ENCODE measurements at regions of chr6 and their contacts with region 1.

Region 1: GRCh38 chr6:154154359-154154967 is 115.4 kb downstream of the OPRM1 start:
- DNase-seq: no peak
- H3K4me3 ChIP-seq: no peak overlapping the region
- H3K27ac ChIP-seq: no peak overlapping the region
- H3K4me1 ChIP-seq: peaks cover 19% of the 10 kb centered on the region
- H3K27me3 ChIP-seq: no peaks in the 10 kb centered on the region
- CTCF ChIP-seq: peak; percentile 87

Region 2: DNA sequence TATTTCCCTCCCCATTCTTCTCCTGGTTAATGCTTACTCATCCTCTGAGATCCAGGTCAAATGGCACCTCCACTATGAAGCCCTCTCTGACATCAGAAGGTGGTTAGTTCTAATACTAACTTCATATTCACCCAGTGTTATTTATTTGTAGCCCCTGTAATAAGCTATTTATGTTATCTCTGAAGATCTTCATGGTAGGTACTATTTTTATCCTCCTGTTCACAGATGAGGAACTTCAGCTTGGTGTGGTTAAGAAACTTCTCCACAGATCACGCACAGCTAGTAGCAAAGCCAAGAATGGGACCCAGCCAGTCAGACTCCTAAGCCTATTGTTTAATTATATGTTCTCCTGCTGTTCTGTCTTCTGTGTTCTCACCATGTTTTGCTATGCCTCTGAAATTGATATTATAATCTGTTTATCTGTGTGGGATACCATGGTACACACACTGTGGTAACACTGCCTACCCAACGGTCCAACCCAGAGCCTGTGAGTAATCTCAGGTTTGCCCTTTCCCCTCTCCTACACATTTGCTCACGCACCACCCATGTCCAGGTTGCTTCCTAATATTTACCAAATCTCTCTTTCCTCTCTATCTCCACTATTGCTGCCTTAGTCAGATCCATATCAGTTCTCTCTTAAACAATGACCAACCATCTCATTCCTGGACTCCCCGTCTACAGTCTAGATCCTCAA is 103.7 kb after region 1 on chr6:
- intact Hi-C with region 1: no loop called
- DNase-seq: no peak
- H3K4me3 ChIP-seq: no peak overlapping the region
- H3K27ac ChIP-seq: no peak overlapping the region
- H3K4me1 ChIP-seq: peaks cover 6% of the 10 kb centered on the region
- H3K27me3 ChIP-seq: no peaks in the 10 kb centered on the region
- CTCF ChIP-seq: no peak

Region 3: DNA sequence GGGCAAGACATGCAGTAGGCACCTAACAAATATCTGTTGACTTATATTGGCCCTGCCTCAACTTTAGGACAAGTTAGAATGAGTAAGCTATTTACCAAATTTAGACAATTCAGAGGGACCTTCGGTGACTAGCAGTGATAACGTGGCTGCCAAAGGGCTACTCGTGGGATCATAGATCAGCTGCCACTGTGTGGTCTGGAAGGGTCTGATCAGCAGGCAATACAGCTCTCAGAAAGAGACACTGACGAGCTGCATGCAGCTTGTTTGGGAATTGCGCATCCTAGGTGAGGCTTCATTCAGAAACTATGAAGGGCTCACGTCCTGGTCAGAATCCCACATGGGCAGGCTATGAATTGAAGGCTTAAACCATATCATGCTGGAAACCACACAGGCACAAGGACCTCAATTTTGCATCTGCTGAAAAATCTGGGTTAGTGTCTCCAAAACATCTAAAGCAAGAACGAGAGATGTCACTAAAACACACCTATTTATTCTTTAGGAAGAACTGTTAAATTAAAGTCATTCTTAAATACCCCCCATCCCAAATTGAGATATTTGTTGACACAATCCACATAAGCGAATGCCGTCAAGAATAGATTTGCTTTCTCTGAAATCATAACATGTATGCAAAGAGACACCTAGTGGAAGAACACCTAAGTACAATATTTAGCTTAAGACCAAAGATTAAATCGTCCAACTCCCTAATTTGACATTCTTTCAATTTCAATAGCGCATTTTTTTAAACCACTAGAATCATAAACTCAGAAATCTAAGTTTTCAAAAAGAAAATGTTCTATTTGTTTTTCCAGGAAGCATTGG is 122.6 kb after region 1 on chr6:
- intact Hi-C with region 1: loop called (anchors 5 kb)
- DNase-seq: no peak
- H3K4me3 ChIP-seq: peak overlapping the region; percentile 32
- H3K27ac ChIP-seq: no peak overlapping the region
- H3K4me1 ChIP-seq: peaks cover 11% of the 10 kb centered on the region
- H3K27me3 ChIP-seq: no peaks in the 10 kb centered on the region
- CTCF ChIP-seq: peak; percentile 71

Measured in left ventricle myocardium inferior (tissue), 1 donor.